Aorta (tissue), 5 donors: ENCODE measurements at regions of chr10 and their contacts with region 1.

Region 1: GRCh38 chr10:98045785-98046389 is 15.5 kb upstream of the CRTAC1 start:
- DNase-seq: peak; percentile 54 to 79
- ATAC-seq: peak; percentile 55
- H3K4me3 ChIP-seq: no peak overlapping the region
- H3K27ac ChIP-seq: no peak overlapping the region
- H3K4me1 ChIP-seq: no peaks in the 10 kb centered on the region
- H3K27me3 ChIP-seq: no peaks in the 10 kb centered on the region

Region 2: GRCh38 chr10:97792141-97792721 is 253.7 kb before region 1 on chr10:
- intact Hi-C with region 1: loop called in 1 of 2 experiments (anchors 5 kb)
- DNase-seq: peak; percentile 72 to 89
- ATAC-seq: no peak
- H3K4me3 ChIP-seq: no peak overlapping the region
- H3K27ac ChIP-seq: no peak overlapping the region
- H3K4me1 ChIP-seq: no peaks in the 10 kb centered on the region
- H3K27me3 ChIP-seq: no peaks in the 10 kb centered on the region

Region 3: GRCh38 chr10:97914837-97915211 is 131.1 kb before region 1 on chr10:
- intact Hi-C with region 1: loop called (anchors 2 kb)
- DNase-seq: peak; percentile 77 to 92
- ATAC-seq: peak; percentile 79
- H3K4me3 ChIP-seq: no peak overlapping the region
- H3K27ac ChIP-seq: no peak overlapping the region
- H3K4me1 ChIP-seq: no peaks in the 10 kb centered on the region
- H3K27me3 ChIP-seq: no peaks in the 10 kb centered on the region